ENCODE measurements at regions of chr9 and their contacts with region 1.

Region 1: GRCh38 chr9:137672907-137673791 is 54.3 kb downstream of the EHMT1 start:
- DNase-seq: peak; percentile 84
- CTCF ChIP-seq: peak; percentile 77

Region 2: GRCh38 chr9:136742591-136743391 is 930.4 kb before region 1 on chr9 and contains the start of gene LCN10:
- CTCF ChIA-PET with region 1: no interaction called
- POLR2A ChIA-PET with region 1: no interaction called
- DNase-seq: no peak
- CTCF ChIP-seq: no peak

Region 3: DNA sequence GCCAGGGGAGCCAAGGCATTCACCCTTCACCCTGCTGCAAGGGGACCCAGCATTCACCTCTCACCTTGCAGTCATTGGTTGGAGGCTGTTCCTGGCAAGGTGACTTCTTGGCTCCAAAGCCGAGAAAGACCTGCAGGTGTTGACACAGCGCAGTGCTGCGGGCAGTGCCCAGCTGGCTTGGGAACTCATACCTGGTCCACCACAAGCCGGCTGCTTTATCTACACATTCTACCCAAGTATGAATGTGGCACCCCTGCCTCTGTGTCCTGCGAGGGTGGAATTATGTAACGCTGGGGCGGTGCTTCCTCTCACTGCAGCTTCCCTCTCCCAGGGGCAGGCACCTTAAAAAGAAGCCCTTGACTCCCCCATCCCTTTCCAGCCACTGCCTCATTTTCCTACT is 80.4 kb before region 1 on chr9:
- CTCF ChIA-PET with region 1: no interaction called
- POLR2A ChIA-PET with region 1: no interaction called
- DNase-seq: no peak
- CTCF ChIP-seq: no peak

Region 4: DNA sequence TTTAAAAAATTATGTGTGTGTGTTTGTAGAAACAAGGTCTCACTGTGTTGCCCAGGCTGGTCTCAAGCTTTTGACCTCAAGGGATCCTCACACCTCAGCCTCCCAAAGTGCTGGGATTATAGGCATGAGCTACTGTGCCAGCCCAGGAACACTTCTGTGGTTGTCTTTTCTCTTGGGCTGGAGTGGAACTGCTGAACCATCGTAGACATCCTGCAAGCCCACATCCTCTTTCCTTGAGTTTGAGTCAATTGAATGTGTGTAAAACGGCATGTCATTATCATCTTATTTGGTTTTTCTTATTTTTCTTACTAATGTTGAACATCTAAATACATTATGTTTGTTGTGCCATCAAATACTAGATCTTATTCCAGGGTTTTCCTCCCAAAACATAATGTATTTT is 14.4 kb before region 1 on chr9:
- CTCF ChIA-PET with region 1: interaction called, 23 read pairs
- POLR2A ChIA-PET with region 1: no interaction called
- DNase-seq: no peak
- CTCF ChIP-seq: no peak

Region 5: GRCh38 chr9:137689745-137690529 is 16.8 kb after region 1 on chr9:
- CTCF ChIA-PET with region 1: interaction called, 17 read pairs
- POLR2A ChIA-PET with region 1: no interaction called
- DNase-seq: no peak
- CTCF ChIP-seq: no peak

Region 6: GRCh38 chr9:137694967-137695879 is 22.1 kb after region 1 on chr9:
- CTCF ChIA-PET with region 1: interaction called, 17 read pairs
- POLR2A ChIA-PET with region 1: no interaction called
- DNase-seq: no peak
- CTCF ChIP-seq: peak; percentile 63

Region 7: DNA sequence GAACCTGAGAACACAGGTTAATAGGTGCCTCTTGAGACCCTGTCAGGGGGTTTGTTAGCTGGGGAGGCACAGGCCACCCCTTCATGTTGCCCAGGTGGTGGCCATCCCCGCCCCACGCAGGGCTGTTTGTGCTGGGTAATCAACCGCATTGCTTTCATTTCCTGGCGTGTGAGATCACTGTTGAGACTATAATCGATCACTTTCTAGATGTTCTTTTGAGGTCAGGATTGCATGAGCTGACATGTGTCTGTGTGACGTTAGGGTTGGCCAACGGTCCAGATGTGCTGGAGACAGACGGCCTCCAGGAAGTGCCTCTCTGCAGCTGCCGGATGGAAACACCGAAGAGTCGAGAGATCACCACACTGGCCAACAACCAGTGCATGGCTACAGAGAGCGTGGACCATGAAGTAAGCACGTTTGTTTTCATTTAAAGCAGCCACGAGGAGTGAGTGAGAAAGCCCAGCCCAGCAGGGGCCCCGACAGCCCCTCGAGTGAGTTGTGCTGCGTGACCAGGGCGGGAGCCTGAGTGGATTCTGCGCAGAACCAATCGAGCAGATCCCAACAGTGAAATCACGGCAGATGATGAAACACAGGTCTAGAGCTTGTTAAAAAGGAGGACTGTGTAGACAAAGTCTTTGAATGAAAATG is 89.4 kb after region 1 on chr9:
- CTCF ChIA-PET with region 1: interaction called, 13 read pairs
- POLR2A ChIA-PET with region 1: no interaction called
- DNase-seq: peak; percentile 80
- CTCF ChIP-seq: no peak

Region 8: GRCh38 chr9:137772281-137772873 is 99.2 kb after region 1 on chr9:
- CTCF ChIA-PET with region 1: interaction called, 13 read pairs
- POLR2A ChIA-PET with region 1: no interaction called
- DNase-seq: no peak
- CTCF ChIP-seq: peak; percentile 21